Sciatic nerve (tissue), 2 donors: ENCODE measurements at regions of chr6 and their contacts with region 1.

Region 1: DNA sequence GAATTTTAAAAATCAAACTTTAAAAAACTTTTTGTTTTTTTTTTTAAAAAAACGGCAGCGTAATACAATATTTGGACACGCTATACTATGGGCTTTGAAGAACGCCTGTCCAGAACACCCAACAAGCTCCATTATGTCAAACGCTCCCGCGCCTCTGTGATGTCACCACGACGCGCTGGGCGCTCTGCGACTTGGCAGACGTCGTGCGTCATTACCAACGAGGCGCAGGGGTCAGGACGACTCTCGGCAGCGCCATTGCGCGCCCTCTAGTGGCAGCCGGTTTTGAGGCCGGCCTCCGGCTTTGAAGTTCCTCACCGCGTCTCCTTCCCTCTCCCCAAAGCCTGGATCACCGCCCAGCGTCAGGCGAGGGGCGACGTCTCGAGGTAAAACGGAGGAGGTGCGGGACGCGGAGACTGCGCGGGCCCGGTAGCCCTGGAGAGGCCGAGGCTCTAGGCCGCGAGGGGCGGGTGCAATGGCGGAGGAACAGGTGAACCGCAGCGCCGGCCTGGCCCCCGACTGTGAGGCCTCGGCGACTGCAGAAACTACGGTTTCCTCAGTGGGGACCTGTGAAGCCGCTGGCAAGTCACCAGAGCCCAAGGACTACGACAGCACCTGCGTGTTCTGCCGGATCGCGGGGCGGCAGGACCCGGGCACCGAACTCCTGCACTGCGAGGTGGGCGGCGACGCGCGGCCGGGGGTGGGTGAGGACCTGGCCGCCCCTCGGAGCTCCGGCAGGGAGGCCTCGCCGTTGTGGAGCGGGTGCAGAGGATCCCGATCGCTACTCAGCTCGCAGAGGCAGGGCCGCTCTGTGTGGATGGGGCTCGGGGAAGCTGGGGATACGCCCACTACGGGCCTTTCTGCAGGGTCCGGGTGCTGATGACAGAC is at the start of gene HINT3:
- DNase-seq: peak; percentile 99
- ATAC-seq: peak; percentile 98
- total RNA-seq, gene HINT3: 25.0 TPM

Region 2: DNA sequence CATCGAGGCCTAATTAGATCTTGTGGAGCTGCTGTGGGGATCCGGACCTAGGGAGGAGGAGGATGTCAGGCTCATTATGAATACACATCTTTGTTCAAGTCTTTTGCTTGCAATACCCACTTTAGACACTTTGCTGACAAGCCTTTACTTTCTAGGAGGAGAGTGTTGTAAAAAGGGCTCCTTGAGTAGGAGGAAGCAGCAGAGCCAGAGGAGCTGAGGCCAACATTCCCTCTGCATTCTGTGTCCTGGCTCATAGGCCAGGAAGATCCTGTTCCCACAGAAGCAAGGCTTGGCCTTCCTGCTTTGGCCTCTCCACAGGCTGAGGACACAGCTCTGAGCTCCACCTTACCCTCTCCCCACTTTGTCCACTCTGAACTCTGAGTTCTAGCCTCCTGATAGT is 736.0 kb before region 1 on chr6:
- intact Hi-C with region 1: no loop called
- DNase-seq: no peak
- ATAC-seq: peak; percentile 85

Region 3: DNA sequence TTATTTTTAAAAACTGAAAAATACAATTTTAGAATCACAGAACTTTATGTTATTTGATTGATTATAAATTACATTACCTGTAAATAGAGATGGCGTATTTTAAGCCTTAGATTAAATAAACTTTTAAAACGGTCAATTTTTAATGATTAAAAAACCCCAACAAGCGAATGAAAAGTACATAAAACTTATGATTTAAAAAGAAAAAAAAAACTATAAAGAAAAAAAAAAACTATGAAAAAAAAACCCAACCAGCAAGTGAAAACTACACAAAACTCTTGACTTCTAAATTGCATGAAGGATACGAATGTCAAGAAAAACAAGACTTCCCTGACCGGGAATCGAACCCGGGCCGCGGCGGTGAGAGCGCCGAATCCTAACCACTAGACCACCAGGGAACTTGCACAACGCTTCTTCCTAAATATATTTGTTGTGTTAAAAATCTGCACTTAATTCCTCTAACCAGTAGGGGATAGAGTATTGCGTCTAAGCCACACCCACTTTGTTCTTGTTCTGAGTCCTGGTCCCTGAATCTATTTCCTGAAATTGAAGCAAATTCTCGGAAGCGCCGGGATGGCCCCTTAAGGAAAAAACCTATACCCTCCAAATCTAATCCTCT is 176.7 kb before region 1 on chr6:
- intact Hi-C with region 1: loop called (anchors 10 kb)
- DNase-seq: peak; percentile 93
- ATAC-seq: peak; percentile 98

Region 4: DNA sequence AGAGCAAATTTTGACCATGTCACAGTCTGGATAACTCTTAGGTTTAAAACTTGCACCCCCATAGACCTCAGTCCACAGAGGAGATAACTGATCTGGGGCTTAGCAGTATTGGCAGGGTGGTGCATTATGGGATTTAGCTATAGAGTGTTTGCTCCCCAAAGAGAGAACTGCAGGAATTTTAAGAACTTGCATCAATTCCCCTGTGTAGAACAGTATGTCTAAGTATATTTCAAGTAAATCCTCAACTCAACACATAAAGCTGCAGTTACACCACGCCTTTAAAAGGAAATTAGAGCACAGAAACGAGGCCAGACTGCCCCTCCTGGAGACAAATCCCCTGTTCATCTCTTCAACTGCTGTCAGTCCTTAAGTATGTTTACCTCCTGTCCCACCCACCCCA is 174.5 kb after region 1 on chr6:
- intact Hi-C with region 1: no loop called
- DNase-seq: no peak
- ATAC-seq: no peak